Activated T-helper 2 cell treated with anti-CD3 and anti-CD28 coated beads, Interferon-gamma antibody, Interleukin-2, Interleukin-4, amounts not matched to agents 10 μg/mL and 5 μg/mL and 100 μg/mL, durations not matched to agents 14 hours and 24 hours and 36 hours (primary cell): ENCODE measurements at regions of chr9 and their contacts with region 1.

Region 1: DNA sequence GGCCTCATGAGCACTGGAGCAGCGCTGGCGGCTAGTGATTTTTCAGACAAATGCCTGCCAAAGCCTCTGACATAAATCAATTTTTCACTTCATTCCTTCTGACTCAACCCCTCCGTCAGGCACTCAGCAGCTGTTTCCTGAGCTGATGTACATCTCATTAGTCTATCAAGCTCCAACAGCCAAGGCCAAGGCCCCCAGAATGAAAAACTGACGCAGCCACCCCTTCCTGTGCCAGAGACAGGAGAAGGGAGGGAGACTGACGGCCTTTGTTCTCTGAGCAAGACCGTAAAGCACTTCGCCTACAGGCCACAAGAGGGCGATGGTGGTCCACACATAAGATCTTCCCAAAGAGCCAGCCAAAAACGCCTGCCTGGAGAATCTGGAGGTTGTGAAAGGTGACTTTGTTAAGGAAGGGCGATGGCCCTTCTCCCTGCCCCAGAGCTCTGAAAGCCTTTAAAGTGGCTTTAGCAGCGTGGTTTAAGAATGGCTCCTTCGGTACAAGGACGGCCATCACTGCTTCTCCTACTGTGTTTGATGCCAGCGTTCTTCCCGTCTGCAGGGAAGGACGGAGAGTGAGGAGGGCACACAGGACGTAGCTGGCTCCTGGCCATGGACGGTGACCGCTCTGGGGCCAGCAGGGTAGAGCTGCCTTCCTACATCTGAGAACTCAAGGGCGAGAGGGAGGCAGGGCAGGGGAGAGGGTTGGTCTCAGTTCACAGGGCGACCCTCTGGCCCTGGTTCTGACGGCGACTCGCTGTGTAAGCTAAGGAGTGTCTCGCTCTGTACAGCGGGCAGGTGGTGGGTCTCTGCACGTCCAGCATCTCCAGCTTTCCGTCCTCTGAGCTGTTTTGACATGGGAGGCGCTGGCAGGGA is 37.0 kb downstream of the ALG2 start:
- DNase-seq: peak; percentile 62
- H3K4me3 Mint-ChIP-seq: no peak overlapping the region
- H3K27ac Mint-ChIP-seq: peak overlapping the region; percentile 79
- H3K4me1 Mint-ChIP-seq: peaks cover 50% of the 10 kb centered on the region
- H3K27me3 Mint-ChIP-seq: peaks cover 10% of the 10 kb centered on the region

Region 2: DNA sequence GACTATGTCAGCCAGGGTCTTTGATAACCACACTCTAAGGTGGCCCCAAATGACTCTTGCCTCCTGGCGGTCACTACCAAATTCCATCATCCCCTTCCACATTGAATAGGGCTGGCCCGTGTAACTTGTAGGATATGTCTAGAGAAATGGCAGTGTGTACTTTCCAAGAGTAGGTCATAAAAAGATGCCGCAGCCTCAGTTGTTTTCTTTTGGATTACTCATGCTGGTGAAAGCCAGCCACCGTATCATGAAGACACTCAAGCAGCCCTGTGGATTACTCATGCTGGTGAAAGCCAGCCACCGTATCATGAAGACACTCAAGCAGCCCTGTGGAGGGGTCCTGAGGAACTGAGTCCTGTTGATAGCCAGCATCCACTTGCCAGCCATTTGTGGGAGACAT is 757.2 kb before region 1 on chr9:
- intact Hi-C with region 1: no loop called
- DNase-seq: no peak
- H3K4me3 Mint-ChIP-seq: no peak overlapping the region
- H3K27ac Mint-ChIP-seq: no peak overlapping the region
- H3K4me1 Mint-ChIP-seq: no peaks in the 10 kb centered on the region
- H3K27me3 Mint-ChIP-seq: no peaks in the 10 kb centered on the region

Region 3: DNA sequence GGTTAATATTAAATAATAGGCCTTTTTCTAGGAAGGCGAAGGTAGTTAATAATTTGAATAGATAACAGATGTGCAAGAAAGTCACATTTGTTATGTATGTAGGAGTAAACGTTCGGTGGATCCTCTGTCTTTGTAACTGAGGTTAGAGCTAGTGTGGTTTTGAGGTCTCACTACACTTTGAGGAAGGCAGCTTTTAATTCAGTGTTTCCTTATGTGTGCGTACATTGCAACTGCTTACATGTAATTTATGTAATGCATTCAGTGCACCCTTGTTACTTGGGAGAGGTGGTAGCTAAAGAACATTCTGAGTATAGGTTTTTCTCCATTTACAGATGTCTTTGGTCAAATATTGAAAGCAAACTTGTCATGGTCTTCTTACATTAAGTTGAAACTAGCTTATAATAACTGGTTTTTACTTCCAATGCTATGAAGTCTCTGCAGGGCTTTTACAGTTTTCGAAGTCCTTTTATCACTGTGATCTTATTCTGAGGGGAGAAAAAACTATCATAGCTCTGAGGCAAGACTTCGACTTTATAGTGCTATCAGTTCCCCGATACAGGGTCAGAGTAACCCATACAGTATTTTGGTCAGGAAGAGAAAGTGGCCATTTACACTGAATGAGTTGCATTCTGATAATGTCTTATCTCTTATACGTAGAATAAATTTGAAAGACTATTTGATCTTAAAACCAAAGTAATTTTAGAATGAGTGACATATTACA is 34.1 kb before region 1 on chr9:
- intact Hi-C with region 1: no loop called
- DNase-seq: no peak
- H3K4me3 Mint-ChIP-seq: no peak overlapping the region
- H3K27ac Mint-ChIP-seq: no peak overlapping the region
- H3K4me1 Mint-ChIP-seq: peaks cover 27% of the 10 kb centered on the region
- H3K27me3 Mint-ChIP-seq: peaks cover 6% of the 10 kb centered on the region

Region 4: DNA sequence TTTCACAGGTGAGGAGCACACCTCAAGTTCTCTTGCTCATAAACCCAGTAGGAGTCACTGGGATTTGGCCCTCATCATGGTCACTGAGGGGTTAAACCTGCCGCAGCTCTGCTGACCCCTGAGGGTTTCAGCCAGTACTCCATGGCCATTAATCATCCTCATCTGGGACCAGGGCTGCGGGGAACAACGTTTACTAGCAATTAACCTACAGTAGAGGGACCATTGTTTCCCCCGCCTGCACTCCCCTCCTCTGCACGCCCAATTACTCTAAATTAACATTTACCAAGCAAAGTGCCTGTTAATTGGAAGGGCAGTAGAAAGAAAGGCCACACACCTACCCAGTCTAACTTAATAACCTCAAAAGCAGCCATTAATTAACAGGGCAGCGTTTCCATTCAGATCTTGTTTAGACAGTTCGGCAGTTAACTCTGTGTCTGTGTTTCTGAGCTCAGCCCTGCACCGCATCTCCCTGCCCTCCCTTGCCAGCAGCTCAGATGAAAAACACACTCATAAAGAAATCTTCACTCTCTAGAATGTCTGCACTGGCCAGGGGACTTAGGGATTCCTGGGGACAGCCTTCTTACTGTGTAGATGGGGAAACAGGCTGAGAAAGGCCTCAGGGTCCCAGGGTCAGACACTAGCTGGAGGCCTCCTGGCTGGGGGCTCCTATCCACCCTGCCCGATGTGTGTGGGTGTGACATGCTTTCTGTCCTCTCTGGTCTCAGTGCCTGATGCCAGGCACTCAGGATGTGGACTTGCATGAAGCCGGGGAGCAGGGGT is 14.5 kb before region 1 on chr9:
- intact Hi-C with region 1: loop called (anchors 2 kb)
- DNase-seq: no peak
- H3K4me3 Mint-ChIP-seq: no peak overlapping the region
- H3K27ac Mint-ChIP-seq: no peak overlapping the region
- H3K4me1 Mint-ChIP-seq: peaks cover 35% of the 10 kb centered on the region
- H3K27me3 Mint-ChIP-seq: peaks cover 5% of the 10 kb centered on the region

Region 5: GRCh38 chr9:99253772-99254431 is 69.2 kb after region 1 on chr9:
- intact Hi-C with region 1: loop called (anchors 2 kb)
- DNase-seq: peak; percentile 71
- H3K4me3 Mint-ChIP-seq: peak overlapping the region; percentile 59
- H3K27ac Mint-ChIP-seq: peak overlapping the region; percentile 97
- H3K4me1 Mint-ChIP-seq: peaks cover 70% of the 10 kb centered on the region
- H3K27me3 Mint-ChIP-seq: no peaks in the 10 kb centered on the region

Region 6: DNA sequence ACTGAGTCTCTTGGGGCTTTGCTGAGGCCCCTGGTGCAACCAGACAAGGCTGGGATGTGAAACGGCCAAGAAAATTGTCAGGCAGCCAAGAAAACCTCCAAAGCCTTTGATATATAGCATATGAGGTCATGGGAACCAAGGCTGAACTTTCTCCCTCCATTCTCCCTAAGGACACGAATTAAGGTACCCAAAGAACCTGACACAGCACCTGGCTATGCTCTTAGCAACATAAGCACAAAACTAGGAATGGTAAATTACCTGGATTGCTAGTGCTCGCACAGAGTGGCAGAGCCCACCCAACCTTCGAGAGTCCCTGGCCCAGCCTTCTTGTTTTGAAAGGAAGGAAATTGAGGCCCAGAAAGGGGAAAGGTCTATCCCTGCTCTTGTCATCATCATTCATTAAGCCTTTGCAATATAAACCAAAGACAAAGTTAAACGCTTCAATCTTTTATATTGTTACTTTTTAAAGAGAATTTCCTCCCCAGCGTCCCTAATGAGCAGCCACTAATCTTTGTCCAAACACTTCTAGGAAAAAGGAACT is 416.9 kb after region 1 on chr9:
- intact Hi-C with region 1: loop called (anchors 10 kb)
- DNase-seq: no peak
- H3K4me3 Mint-ChIP-seq: no peak overlapping the region
- H3K27ac Mint-ChIP-seq: no peak overlapping the region
- H3K4me1 Mint-ChIP-seq: peaks cover 16% of the 10 kb centered on the region
- H3K27me3 Mint-ChIP-seq: no peaks in the 10 kb centered on the region

Region 7: GRCh38 chr9:100084734-100085133 is 900.0 kb after region 1 on chr9:
- intact Hi-C with region 1: loop called (anchors 5 kb)
- DNase-seq: no peak
- H3K4me3 Mint-ChIP-seq: no peak overlapping the region
- H3K27ac Mint-ChIP-seq: peak overlapping the region; percentile 67
- H3K4me1 Mint-ChIP-seq: peaks cover 65% of the 10 kb centered on the region
- H3K27me3 Mint-ChIP-seq: no peaks in the 10 kb centered on the region